ENCODE measurements at regions of chr11 and their contacts with region 1.

Region 1: GRCh38 chr11:20397281-20397680 is 9.8 kb downstream of the PRMT3 start:
- DNase-seq: no peak

Region 2: DNA sequence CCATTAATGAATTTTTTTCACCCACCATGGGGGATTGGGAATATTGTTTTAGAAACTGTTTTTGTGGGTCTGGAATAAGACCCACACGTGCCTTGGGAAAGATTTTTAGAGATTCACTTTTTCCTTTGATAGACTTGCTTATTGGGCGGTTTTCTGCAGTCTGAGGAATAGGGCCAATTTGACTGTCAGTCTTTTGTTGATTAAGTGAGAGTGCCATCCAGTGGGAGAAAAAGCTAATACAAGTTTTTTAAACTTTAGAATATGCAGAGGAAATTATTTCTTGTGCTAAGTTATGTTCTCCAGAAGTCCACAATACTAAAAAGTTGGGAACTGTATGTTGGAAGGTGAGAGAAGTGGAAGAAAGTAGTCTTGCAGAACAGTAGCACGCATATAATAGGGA is 46.3 kb after region 1 on chr11:
- intact Hi-C with region 1: no loop called
- DNase-seq: no peak

Region 3: DNA sequence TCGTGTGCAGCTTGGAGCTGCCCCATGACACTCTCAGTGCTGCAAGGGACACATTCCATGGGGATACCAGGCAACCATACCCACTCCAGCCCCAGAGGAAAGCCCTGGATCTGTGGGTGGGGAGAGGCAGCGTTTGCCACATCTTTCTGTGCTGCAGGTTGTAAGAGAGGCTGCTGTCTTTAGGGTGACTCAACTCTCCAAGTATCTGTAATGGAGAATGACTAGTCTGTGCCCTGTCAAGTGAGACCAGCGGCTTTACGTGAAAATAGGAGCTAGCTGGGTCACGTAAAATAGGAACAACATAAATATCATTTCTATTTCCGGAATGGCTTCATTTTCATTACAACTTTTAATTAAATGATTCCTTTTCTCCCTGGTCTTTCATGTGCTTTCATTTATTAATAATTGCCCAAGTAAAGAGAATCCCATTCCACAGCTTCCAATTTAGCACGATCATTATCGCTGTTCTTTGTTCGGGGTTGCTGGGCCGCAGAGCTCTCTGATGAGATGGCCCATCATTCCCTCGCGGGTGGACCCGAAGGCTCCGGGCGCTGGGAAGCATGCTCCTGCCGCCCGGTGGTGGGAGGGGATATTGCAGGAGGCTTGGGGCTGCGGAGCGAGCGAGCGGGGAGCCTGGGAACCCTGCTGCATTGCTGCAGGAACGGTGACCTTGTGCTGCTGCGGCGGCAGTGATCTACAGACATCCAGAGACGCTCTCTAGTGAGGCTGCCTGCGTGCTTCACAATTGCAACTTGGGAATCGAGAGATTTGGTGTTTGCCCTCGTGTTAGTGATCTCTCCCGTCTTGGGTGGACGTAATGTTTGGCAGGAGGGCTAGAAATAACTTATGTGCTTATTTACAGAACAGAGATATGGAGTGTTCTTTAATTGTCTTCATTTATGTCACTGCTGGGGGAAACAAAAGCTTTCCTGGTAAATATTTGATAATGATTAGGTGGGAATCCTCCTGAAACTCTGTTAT is 212.7 kb after region 1 on chr11:
- intact Hi-C with region 1: loop called (anchors 2 kb)
- DNase-seq: peak; percentile 83